Breast epithelium (tissue), 4 donors: ENCODE measurements at regions of chr11 and their contacts with region 1.

Region 1: DNA sequence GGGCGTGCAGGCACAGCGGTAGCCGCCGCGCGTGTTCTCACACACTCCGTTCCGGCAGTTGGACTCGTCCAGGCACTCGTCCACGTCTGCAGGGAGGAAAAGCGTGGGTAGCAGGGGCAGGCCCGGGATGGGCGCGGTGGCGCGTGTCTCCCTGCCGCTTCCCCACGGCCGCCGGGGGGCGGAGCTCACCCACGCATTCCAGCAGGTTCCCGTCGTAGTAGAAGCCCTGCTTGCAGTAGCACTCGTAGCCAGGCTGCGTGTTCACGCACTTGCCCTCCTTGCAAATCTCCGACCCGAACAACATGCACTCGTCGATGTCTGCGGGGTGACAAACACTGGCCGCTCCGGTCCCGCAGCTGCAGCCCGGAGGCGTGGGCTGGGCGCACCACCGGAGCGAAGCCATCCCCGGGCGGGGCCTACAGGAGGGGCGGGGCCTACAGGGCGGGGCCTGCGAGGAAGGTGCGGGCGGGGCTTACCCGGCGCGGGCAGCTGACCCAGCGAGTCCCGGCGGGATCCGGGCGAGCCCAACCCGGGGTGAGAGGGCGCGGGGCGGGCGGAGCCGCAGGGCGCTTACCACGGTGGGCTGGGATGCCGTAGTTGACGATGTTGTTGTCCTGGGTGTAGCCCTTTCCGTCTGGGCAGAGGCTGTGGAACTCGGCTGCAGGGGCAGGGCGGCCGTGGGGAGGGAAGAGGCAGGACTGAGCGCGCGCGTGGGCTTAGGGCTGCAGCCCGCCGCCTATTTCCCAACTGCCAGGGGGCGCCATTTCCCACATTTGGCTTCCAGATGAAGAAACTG is 15.6 kb downstream of the SCYL1 start:
- DNase-seq: peak; percentile 83 to 93
- H3K4me3 ChIP-seq: peak overlapping the region; percentile 41 to 71 (median 56)
- H3K27ac ChIP-seq: peak overlapping the region; percentile 88 to 97
- H3K4me1 ChIP-seq: peaks cover 6 to 12% of the 10 kb centered on the region in 2 donors
- H3K27me3 ChIP-seq: no peaks in the 10 kb centered on the region
- CTCF ChIP-seq: peak; percentile 92 to 97 (median 96)
- POLR2A ChIP-seq: no peak

Region 2: DNA sequence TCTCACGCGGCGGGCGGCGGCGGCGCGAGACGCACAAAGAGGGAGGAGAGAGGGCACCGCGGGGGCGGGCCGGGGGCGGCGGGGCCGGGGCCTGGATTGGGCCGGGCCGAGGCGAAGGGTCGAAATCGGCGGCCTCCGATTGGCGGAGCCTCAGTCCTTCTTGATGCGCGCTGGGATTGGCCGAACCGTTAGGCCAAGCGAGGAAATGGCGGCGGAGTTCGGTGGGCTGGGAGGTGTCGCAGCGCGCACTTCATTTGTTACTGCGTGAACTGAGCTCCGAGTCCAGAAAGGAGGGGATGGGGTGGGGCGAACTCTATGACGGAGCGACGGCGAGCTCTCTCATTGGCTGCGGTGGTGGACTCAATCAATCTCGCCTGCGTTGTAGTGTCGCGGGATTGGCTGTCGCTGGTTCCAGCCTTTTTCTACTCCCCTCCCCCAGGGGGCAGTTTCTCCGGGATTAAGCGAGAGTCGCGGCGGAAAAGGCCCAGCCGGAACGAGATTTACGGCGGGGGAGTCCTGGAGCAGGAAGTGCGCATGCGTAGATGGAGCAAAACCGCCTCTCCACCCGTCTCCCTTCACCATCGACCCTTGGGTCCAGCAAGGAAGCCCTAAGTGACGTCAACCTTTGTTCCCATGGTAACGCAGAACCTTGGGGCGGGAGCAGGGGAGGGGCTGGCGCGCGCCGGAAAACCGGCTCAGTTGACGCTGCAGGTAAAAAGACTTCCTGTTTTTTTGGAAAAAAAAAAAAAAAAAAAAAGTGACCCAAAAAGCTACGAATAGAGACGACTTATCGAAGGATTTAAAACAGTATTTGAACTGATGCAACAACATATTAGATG is 761.8 kb before region 1 on chr11 and contains the start of gene SF1:
- intact Hi-C with region 1: loop called (anchors 5 kb)
- DNase-seq: peak; percentile 99 to 100
- H3K4me3 ChIP-seq: peak within 1 kb of the TSS; percentile 97 to 100 (median 98)
- H3K27ac ChIP-seq: peak within 1 kb of the TSS; percentile 99 to 100
- H3K4me1 ChIP-seq: peaks cover 3 to 24% of the 10 kb centered on the region in 2 donors
- H3K27me3 ChIP-seq: no peaks in the 10 kb centered on the region
- CTCF ChIP-seq: peak in 1 of 3 donors; percentile 10
- POLR2A ChIP-seq: peak; percentile 90
- total RNA-seq, gene SF1: 264 to 293 (median 277) TPM

Region 3: DNA sequence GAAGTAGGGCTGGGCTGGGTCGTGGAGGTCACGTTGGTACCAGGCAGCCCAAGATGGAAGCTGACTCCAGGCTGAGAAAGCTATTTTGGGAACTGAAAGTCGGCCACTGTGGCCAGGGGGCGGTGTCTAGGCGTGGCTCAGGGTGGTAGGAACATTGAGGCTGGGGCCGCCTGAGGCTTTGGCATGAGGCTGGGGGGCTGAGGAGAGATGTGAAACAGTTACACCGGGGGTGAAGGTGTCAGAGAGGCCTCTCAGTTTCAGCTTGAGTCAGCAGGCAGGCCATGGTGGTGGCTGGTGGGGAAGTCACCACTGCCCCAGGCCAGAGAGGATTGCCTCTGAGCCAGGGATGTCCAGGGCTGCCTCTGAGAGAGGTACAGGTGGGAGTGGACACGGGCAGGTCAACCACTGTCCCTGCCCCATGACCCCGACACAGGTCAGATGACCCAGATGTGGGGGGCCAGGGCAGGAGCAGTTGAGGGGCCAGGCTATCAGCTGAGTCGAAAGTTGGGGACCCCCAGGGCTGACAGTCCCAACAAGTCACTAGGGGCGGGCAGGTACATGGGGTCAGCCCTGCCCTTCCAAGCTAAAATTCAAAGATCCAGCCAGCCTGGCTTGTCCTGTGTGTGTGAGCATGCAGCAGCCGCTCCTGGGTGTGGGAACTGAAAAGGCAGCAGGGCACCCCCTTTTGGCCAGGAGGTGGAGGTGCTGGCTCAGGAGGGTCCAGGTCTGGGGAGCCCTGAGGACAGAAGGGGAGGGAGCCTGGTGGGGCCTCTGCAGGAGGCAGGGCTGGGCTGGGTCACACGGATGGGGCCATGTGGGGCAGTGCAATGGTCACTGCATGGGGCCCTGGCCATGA is 47.9 kb after region 1 on chr11:
- intact Hi-C with region 1: loop called (anchors 5 kb)
- DNase-seq: no peak
- H3K4me3 ChIP-seq: no peak overlapping the region
- H3K27ac ChIP-seq: peak overlapping the region; percentile 19 to 56
- H3K4me1 ChIP-seq: peaks cover 0 to under 1% of the 10 kb centered on the region in 2 donors
- H3K27me3 ChIP-seq: no peaks in the 10 kb centered on the region
- CTCF ChIP-seq: peak; percentile 20 to 71 (median 45)
- POLR2A ChIP-seq: no peak